ENCODE measurements at regions of chr11 and their contacts with region 1.

Region 1: GRCh38 chr11:103682318-103683184 is 353.9 kb upstream of the DDI1 start:
- DNase-seq: peak; percentile 79
- H3K4me3 Mint-ChIP-seq: no peak overlapping the region
- H3K27ac Mint-ChIP-seq: no peak overlapping the region
- H3K4me1 Mint-ChIP-seq: peaks cover 8% of the 10 kb centered on the region
- H3K27me3 Mint-ChIP-seq: no peaks in the 10 kb centered on the region
- CTCF ChIP-seq: peak; percentile 80

Region 2: GRCh38 chr11:103700622-103701021 is 18.1 kb after region 1 on chr11:
- CTCF ChIA-PET with region 1: interaction called, 13 read pairs
- POLR2A ChIA-PET with region 1: no interaction called
- intact Hi-C with region 1: no loop called
- DNase-seq: peak; percentile 45
- H3K4me3 Mint-ChIP-seq: no peak overlapping the region
- H3K27ac Mint-ChIP-seq: no peak overlapping the region
- H3K4me1 Mint-ChIP-seq: peaks cover 23% of the 10 kb centered on the region
- H3K27me3 Mint-ChIP-seq: no peaks in the 10 kb centered on the region
- CTCF ChIP-seq: no peak

Region 3: GRCh38 chr11:103927535-103927934 is 245.0 kb after region 1 on chr11:
- CTCF ChIA-PET with region 1: interaction called, 8 read pairs
- POLR2A ChIA-PET with region 1: no interaction called
- intact Hi-C with region 1: loop called (anchors 5 kb)
- DNase-seq: peak; percentile 43
- H3K4me3 Mint-ChIP-seq: no peak overlapping the region
- H3K27ac Mint-ChIP-seq: no peak overlapping the region
- H3K4me1 Mint-ChIP-seq: peaks cover 7% of the 10 kb centered on the region
- H3K27me3 Mint-ChIP-seq: no peaks in the 10 kb centered on the region
- CTCF ChIP-seq: peak; percentile 54

Region 4: DNA sequence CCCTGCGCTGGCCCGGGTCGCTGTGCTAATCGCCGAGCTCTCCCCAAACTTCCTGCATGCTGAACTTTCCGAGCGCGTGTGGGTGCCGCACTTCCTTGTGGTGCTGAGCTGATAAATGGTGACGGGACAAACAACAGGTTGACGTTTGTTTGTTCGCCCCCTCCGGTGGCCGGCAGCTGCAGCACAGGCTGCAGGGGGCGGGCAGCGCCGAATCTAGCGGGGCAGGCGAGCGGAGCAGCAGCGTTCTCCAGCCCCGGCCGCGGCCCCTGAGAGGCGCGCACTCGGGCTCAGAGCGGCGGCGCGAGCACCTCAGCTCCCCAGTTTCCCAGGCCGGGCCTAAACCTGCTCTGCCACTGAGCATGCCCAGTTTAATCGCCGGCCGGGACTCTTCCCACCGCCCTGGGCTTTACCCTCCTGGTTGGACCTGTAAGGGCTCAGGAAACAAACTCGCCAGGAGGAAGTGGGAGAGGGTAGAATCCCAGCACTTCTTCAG is 481.5 kb after region 1 on chr11 and contains the start of gene PDGFD:
- CTCF ChIA-PET with region 1: interaction called, 17 read pairs
- POLR2A ChIA-PET with region 1: interaction called, 4 read pairs
- intact Hi-C with region 1: no loop called
- DNase-seq: peak; percentile 35
- H3K4me3 Mint-ChIP-seq: peak within 1 kb of the TSS; percentile 81
- H3K27ac Mint-ChIP-seq: no peak within 1 kb of the TSS
- H3K4me1 Mint-ChIP-seq: no peaks in the 10 kb centered on the region
- H3K27me3 Mint-ChIP-seq: no peaks in the 10 kb centered on the region
- CTCF ChIP-seq: no peak
- total RNA-seq, gene PDGFD: 0.27 and 0.61 TPM in 2 replicates

Region 5: DNA sequence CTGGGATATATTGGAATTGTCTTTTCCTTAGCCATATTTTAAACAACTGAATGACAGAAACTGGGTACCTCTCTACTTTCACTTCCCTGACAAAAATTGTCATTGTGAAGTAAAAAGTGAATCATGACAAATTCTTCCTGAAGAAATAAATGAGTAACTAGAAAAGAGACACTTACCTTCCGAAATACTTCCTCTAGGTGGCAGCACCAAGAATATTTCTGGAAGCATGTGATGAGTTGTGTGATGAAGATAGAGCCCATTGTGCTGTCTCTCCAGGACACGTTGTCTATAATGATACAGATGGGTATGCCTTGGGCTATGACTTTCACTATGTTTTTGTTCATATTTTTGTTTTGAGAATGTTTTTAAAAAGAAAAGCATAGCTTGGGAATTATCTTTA is 1264.4 kb after region 1 on chr11:
- CTCF ChIA-PET with region 1: no interaction called
- POLR2A ChIA-PET with region 1: no interaction called
- intact Hi-C with region 1: loop called (anchors 5 kb)
- DNase-seq: peak; percentile 80
- H3K4me3 Mint-ChIP-seq: no peak overlapping the region
- H3K27ac Mint-ChIP-seq: no peak overlapping the region
- H3K4me1 Mint-ChIP-seq: peaks cover 5% of the 10 kb centered on the region
- H3K27me3 Mint-ChIP-seq: no peaks in the 10 kb centered on the region
- CTCF ChIP-seq: peak; percentile 17

Measured in MCF 10A (cell line).